ENCODE measurements at regions of chr10 and their contacts with region 1.

Region 1: DNA sequence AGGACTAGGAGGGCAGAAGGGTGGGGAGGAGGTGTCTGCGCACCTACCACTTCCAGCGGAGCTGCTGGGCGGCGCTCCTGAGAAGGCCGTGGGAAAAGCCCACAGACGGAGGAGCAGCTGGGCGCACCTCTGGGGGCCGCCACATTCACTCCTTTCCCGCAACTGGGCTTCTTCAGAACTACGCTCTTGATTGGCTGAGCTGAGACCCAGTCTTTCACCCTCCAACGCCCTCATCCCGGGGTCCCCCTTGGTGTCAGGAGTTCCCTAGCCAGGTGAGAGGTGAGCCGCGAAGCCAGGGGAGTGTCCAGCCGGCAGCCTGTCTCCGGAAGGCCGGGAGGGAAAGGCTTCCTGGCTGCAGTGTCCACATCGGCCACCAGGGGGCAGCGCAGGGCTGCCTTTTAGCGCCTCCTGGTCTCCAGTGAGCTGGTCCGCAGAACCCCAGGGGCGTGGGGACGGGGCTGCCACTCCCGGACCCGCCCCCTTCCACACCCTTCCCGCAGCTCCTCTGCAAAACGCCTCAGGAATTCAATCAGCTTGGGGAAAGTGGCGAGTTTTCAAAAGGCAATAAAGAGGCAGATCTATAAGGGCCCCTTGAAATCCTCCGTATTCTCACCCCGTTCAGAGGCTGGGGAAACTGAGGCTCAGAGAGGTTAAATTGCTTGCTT is 98.8 kb downstream of the CHST15 start:
- DNase-seq: peak; percentile 88
- H3K4me3 ChIP-seq: peak overlapping the region; percentile 22
- H3K27ac ChIP-seq: peak overlapping the region; percentile 68
- H3K27me3 ChIP-seq: peaks cover 27% of the 10 kb centered on the region
- CTCF ChIP-seq: peak; percentile 95

Region 2: DNA sequence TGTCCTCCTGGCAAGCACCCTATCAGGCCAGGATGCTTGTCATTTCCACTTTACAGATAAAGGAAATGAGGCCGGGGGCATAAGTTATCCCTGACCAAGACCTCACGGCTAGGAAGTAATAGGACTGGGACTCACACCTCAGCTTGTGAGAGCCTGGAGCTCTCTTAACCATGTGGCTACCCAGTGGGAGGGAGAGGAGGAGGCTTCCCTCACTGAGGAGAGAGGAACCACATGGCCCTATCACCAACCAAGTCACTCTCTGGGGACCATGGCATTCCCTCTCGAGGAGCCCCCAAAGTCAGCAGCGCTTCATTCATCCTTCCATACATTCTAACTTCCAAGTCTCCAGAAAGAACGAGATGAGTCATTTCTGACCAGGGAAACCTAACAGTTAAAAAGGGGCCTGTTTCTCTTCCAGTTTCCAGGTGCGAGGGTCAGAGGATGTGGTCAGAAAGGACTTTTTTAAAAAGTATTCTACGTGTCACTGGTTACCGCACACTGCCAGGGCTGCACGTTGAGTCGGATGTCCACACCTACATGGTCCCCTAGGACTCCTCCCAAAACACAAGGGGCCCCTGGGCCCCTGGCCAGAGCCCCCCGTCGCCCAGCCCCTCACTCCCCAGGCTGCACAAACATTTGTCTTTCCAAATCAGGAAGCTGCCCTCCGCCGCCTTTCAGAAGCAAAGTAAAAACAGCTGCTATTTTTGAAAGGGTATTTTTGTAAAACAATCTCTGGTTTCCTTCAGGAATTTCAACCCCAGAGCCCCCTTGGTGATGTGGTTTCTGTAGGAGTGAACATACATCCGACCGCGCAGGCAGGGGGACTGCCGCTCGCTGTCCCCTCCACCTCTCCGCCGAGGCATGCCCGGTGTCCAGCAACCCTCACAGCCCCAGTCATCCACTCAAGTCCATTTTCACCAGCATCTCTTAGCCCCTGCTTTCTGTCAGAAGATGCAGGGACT is 227.1 kb after region 1 on chr10:
- in situ Hi-C with region 1: no loop called
- DNase-seq: peak; percentile 15
- H3K4me3 ChIP-seq: no peak overlapping the region
- H3K27ac ChIP-seq: no peak overlapping the region
- H3K27me3 ChIP-seq: peaks cover 5% of the 10 kb centered on the region
- CTCF ChIP-seq: no peak

Region 3: GRCh38 chr10:124388823-124389612 is 394.5 kb after region 1 on chr10:
- in situ Hi-C with region 1: loop called (anchors 25 kb)
- DNase-seq: peak; percentile 61
- H3K4me3 ChIP-seq: peak overlapping the region; percentile 45
- H3K27ac ChIP-seq: no peak overlapping the region
- H3K27me3 ChIP-seq: no peaks in the 10 kb centered on the region
- CTCF ChIP-seq: peak; percentile 82

Measured in brain microvascular endothelial cell (primary cell).